Tibial artery (tissue), 4 donors: ENCODE measurements at regions of chr17 and their contacts with region 1.

Region 1: GRCh38 chr17:55750750-55751657 is at the start of gene PCTP:
- DNase-seq: peak; percentile 95 to 96
- H3K4me3 ChIP-seq: peak within 1 kb of the TSS; percentile 69 to 78
- H3K27ac ChIP-seq: peak within 1 kb of the TSS; percentile 79 to 84
- H3K4me1 ChIP-seq: peaks cover 0 to 16% (median 10%) of the 10 kb centered on the region in 4 donors
- H3K27me3 ChIP-seq: no peaks in the 10 kb centered on the region
- CTCF ChIP-seq: peak; percentile 40 to 42

Region 2: DNA sequence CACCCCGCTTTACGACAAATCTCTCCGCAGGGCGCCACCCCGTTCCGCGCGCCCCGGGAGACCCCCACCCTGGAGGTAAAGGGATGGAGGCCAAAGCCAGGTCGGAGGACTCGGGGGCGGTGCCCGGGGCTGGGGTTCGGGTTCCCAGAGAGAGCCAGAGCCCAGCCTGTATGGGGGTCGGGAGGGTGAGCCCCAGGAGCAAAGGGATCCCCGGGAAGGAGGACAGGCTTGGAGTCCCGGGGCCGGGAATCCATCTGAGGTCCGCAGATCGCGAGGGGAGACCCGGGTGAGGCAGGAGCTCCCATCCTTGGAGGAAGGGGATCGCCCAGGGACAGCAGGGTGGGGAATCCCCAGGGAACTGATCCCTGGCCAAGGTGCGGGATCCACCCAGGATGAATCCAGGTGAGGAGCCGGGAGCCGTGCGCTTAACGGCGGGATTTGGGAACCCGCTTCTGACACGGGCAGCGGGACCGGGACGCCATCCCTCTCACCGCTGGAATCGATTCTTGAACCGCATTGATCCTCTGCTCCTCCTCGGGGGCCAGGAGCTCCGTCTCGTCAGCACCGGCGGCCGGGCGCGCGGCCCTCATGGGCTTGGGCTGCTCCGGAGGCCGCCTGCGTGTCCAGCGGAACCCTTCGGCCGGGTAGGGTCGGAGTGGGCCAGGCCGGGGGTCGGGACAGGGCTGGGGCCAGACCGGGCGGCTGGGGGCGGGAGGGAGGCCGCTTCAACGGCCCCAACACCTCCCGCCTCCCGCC is 329.6 kb before region 1 on chr17 and contains the start of gene MMD:
- intact Hi-C with region 1: loop called (anchors 10 kb)
- DNase-seq: peak in 1 of 2 donors; percentile 67
- H3K4me3 ChIP-seq: peak within 1 kb of the TSS; percentile 88 to 92
- H3K27ac ChIP-seq: peak within 1 kb of the TSS; percentile 78 to 81
- H3K4me1 ChIP-seq: peaks cover 0 to 29% (median 14%) of the 10 kb centered on the region in 4 donors
- H3K27me3 ChIP-seq: peaks cover 0 to 12% of the 10 kb centered on the region in 2 donors
- CTCF ChIP-seq: no peak

Region 3: DNA sequence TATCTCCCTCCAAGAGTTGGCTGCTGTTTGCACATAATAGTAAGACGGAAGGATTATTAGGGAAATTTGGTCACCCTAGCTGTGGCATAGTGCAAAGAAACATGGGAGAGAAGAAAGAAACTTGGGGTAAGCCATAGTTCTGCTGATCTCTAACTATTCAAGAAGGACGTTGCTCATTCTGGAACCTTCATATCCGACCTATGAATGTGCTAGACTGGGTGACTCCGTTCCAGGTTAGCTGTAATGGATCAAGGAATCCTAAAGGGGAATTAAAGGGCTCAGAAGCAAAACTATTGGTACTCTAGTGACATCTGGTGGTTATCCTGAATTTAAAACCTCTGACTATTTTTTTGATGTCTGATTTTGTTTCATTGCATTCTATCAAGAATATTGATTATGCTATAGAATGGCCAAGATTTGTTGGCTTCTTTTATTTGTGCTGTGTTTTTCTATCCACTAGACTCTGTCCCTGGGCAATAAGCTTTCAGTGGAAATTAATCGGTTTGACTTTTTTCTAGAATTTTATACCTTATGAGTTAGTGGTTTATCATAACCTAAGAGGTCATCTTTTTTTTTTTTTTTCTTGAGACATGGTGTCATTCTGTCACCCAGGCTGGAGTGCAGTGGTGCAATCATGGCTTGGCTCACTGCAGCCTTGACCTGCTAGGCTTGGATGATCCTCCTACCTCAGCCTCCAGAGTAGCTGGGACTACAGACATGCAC is 19.3 kb after region 1 on chr17:
- intact Hi-C with region 1: no loop called
- DNase-seq: no peak
- H3K4me3 ChIP-seq: no peak overlapping the region
- H3K27ac ChIP-seq: no peak overlapping the region
- H3K4me1 ChIP-seq: peaks cover 0 to 3% (median 0%) of the 10 kb centered on the region in 4 donors
- H3K27me3 ChIP-seq: no peaks in the 10 kb centered on the region
- CTCF ChIP-seq: peak; percentile 49 to 69

Region 4: DNA sequence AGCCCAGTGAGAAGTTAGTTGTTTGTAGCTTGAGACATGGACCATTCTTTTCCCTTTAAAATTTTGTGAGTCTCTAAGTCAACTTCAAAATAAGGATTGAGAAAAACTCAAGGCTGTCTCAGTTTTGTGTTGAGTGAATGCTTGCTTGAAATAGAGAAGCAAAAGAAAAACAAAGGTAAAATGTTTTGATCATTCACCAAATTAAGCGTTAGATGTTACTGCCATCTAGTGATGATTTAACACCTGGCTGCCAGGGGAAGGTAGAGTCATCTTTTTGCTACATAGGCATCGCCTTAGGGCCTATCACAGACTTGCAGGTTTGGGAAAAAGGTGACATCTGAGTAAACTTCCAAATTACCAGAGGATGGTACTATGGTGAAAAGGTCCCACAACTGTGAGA is 74.2 kb after region 1 on chr17:
- intact Hi-C with region 1: no loop called
- DNase-seq: no peak
- H3K4me3 ChIP-seq: no peak overlapping the region
- H3K27ac ChIP-seq: no peak overlapping the region
- H3K4me1 ChIP-seq: no peaks in the 10 kb centered on the region
- H3K27me3 ChIP-seq: no peaks in the 10 kb centered on the region
- CTCF ChIP-seq: no peak